ENCODE measurements at regions of chr22 and their contacts with region 1.

Region 1: DNA sequence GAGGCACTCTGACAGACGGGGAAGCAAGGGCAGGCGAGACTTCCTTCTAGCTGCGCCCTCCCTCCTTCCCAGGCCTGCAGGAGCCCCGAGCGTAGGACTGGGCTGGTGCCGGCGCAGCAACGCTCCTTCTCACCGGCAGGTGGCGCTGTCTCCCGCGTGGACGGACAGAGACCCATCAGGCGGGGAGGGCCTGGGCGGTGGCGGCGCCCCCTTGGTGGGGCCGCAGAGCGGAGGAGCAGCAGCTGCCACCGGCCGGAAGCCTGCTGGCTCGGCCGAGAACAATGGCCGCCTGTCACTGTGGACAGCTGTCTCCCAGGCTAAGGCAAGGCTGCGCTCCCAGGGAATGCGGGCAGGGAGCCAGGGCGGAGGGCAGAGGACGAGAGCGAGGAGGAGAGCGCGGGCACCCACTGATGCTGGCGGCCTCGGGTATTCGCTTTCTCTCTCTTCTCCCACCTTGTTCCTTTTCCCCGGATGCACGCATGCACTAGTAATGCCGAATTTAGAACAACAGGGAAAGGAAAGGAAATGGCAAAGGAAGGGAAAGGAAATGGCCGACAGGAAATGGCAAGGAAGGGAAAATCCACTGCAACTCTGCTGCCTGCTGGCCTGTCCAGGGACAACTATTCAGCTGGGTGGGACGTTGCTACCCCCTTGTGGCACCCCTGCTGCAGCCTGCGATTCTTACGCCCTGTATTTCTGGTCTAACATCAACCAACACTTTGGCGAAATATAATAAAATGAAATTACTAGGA is 14.4 kb downstream of the PPM1F start:
- DNase-seq: peak; percentile 94
- ATAC-seq: peak; percentile 90 to 93

Region 2: GRCh38 chr22:21712894-21713712 is 225.1 kb before region 1 on chr22:
- intact Hi-C with region 1: loop called (anchors 2 kb)
- DNase-seq: peak; percentile 66
- ATAC-seq: peak; percentile 91 to 94

Region 3: GRCh38 chr22:21778705-21779363 is 159.4 kb before region 1 on chr22:
- intact Hi-C with region 1: loop called in 1 of 2 experiments (anchors 10 kb)
- DNase-seq: no peak
- ATAC-seq: no peak